ENCODE measurements at regions of chr11 and their contacts with region 1.

Region 1: DNA sequence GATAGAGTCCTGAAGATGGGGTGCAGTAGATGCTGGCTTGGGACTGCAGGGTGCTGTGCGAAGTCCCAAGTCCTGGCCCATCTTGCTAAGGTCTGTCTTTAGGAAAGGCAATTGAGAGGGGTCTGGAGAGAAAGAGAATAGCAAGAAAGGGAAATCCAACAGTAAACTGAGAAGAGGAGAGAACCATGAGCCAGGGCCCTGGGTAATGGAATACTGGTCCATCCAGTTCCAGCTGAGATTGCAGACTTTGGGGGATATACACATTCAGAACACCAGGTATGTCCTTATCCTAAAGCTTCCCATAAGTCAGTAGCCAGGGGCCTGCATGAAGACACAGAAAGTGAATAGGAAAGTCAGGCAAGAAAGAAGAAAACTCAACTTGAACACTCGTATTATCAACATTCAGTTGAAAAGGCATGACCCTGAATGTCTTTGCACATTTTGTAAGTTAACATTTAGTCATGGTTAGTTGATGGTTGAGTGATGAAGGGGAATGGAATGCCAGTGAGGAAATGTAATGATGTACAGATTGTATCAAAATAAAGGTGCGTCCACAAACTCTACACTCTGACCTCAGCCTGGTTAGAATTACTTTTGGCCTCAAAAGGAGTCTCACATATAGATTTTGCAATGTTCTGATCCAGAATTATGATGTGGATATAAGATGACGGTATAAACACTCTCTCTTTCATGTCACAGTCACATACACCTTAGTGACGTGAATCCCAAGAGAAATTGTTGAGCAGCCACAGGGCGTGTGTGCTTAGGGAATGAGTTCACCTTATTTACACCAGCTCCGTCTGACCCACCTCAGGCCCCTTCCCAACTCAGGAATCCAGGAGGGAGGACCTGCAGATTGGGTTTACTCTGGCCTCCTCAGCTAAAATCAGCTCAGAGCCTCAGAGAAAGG is 100.3 kb downstream of the RDX start:
- DNase-seq: no peak
- ATAC-seq: no peak
- H3K4me3 ChIP-seq: no peak overlapping the region
- H3K27ac ChIP-seq: no peak overlapping the region
- H3K4me1 ChIP-seq: no peaks in the 10 kb centered on the region
- H3K27me3 ChIP-seq: no peaks in the 10 kb centered on the region
- CTCF ChIP-seq: no peak
- POLR2A ChIP-seq: no peak

Region 2: DNA sequence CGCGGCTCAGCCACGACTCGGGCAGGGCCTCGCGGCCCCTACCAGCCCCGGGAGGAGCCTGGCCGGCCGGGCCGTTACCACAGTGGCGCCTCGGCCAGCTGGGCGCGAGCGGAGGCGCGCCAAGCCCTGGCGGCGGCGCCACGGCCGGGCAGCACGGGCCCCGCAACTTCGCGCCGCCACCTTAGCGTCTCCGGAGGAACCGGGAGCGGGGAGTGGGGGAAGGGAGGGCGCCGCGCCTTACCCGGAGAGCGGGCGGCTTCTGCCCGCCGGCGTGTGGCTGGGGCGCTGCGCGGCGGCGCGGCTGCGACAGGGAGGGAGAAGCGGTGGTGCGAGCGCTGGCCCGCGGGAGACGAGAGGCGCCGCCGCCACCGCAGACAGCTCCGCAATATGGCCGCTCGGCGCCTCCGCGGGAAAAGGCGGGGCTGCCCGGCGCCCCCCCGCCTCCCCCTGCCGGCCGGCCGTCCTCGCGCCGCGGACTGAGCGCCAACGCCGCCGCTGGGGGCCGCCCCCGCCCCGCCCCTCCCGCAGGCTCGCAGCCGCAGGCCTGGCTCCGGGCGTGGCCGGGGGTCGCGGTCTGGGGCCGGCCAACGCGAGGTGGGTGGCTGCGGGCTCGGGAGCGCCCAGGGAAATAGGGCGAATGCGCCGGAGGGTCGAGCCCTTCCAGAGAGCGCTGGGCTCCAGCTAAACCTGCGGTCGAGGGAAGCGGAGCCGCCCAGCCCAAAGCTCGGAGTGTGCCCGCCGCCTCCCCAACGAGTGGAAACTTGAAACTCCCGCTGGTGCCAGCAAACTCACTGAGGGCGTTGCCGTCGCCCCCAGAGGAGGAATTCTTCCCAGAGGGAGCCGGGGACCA is 100.4 kb after region 1 on chr11 and contains the start of gene RDX:
- in situ Hi-C with region 1: no loop called
- intact Hi-C with region 1: loop called (anchors 10 kb)
- DNase-seq: peak; percentile 47 to 78
- ATAC-seq: peak; percentile 91 to 96
- H3K4me3 ChIP-seq: peak within 1 kb of the TSS; percentile 77 to 96 (median 88)
- H3K27ac ChIP-seq: peak within 1 kb of the TSS; percentile 93 to 99 (median 96)
- H3K4me1 ChIP-seq: peaks cover 31 to 33% of the 10 kb centered on the region in 2 donors
- H3K27me3 ChIP-seq: no peaks in the 10 kb centered on the region
- CTCF ChIP-seq: peak in 2 of 5 experiments; percentile 34 to 35
- POLR2A ChIP-seq: peak; percentile 81 to 84
- total RNA-seq, gene RDX: 95.7 to 140 (median 115) TPM

Region 3: GRCh38 chr11:110366291-110366690 is 170.2 kb after region 1 on chr11:
- in situ Hi-C with region 1: loop called (anchors 5 kb)
- intact Hi-C with region 1: loop called (anchors 2 kb)
- DNase-seq: no peak
- ATAC-seq: no peak
- H3K4me3 ChIP-seq: no peak overlapping the region
- H3K27ac ChIP-seq: peak overlapping the region in 1 of 4 donors; percentile 18
- H3K4me1 ChIP-seq: peaks cover 0 to 21% of the 10 kb centered on the region in 2 donors
- H3K27me3 ChIP-seq: no peaks in the 10 kb centered on the region
- CTCF ChIP-seq: no peak
- POLR2A ChIP-seq: no peak

Region 4: GRCh38 chr11:110429731-110430266 is 233.7 kb after region 1 on chr11 and contains the start of gene FDX1:
- in situ Hi-C with region 1: loop called in 2 of 4 experiments (anchors 10 kb)
- intact Hi-C with region 1: loop called (anchors 1 kb)
- DNase-seq: peak; percentile 53 to 73
- ATAC-seq: peak; percentile 91 to 92
- H3K4me3 ChIP-seq: peak within 1 kb of the TSS; percentile 62 to 88 (median 68)
- H3K27ac ChIP-seq: peak within 1 kb of the TSS; percentile 85 to 92 (median 90)
- H3K4me1 ChIP-seq: peaks cover 21 to 24% of the 10 kb centered on the region in 2 donors
- H3K27me3 ChIP-seq: no peaks in the 10 kb centered on the region
- CTCF ChIP-seq: peak in 4 of 5 experiments; percentile 75 to 90 (median 83)
- POLR2A ChIP-seq: peak; percentile 68 to 80
- total RNA-seq, gene FDX1: 13.3 to 25.0 (median 21.3) TPM

Measured in gastrocnemius medialis (tissue), 4 donors.